Heart right ventricle (tissue), 16 donors: ENCODE measurements at regions of chr3 and their contacts with region 1.

Region 1: DNA sequence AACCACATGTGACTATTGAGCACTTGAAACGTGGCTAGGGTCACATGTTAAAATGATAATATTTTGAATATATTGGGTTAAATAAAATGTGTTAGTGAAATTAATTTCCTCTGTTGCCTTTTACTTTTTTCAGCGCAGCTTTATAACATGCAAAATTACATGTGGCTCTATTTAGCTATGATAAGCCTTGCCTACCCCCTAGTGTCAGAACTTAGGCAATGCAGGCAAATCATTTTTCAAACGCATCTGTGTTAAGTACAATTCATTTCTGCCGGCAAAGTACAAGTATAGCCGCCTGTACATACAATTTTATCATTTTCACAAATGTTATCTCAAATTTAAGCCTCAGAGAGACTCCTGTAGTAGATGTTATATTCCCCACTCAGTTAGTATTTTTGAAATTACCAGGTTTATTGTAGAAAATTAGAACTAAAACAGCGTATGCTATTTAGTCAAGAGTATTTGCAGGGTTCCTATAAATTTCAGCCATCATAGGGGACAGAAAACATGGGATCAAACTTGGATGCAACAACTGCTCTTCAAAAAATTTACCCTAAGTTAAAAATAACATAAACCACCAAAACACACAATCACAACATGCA is 56.1 kb downstream of the TAFA4 start:
- DNase-seq: peak in 1 of 2 donors; percentile 14
- ATAC-seq: peak in 2 of 8 donors; percentile 51 to 54
- H3K4me3 ChIP-seq: no peak overlapping the region
- H3K27ac ChIP-seq: no peak overlapping the region
- H3K4me1 ChIP-seq: no peaks in the 10 kb centered on the region
- H3K27me3 ChIP-seq: peaks cover 0 to 69% (median 13%) of the 10 kb centered on the region in 7 donors
- CTCF ChIP-seq: peak; percentile 73 to 90 (median 84)

Region 2: DNA sequence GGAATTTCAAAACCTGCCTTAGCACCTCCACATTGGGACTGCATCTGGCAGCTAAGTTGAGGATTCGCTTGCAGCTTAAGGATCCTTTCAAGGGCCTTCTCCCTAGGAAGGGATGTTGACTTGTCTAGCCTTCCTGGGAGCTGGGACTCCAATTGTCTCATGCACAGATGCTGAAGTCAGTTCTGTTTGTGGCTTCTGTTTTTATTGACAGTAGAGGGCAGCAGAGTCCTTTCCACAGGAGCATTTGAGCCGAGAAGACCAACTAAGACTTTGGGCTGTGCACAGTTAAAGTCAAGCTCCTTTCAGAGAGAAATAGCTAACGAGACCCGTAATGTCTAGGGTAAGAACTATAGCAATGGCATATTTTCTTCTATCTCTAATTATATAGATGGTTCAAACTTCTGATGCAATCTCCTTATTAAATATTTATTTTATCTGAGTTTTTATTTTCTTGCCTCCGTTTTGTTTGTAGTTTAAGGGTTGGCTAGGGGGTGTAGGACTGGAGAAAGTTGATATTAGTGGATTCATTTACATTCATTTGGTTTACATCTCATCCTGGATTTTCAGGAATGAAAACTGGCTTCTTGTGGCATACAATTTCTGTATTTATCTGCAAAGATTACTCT is 1937.8 kb before region 1 on chr3:
- intact Hi-C with region 1: loop called in 3 of 10 experiments (anchors 10 kb)
- DNase-seq: peak in 1 of 2 donors; percentile 17
- ATAC-seq: peak in 5 of 8 donors; percentile 44 to 75 (median 58)
- H3K4me3 ChIP-seq: no peak overlapping the region
- H3K27ac ChIP-seq: no peak overlapping the region
- H3K4me1 ChIP-seq: no peaks in the 10 kb centered on the region
- H3K27me3 ChIP-seq: peaks cover 0 to 52% (median 21%) of the 10 kb centered on the region in 7 donors
- CTCF ChIP-seq: peak; percentile 57 to 76 (median 71)

Region 3: GRCh38 chr3:67113802-67114407 is 1762.3 kb before region 1 on chr3:
- intact Hi-C with region 1: loop called in 7 of 10 experiments (anchors 5 to 10 kb)
- DNase-seq: peak; percentile 45 to 70
- ATAC-seq: peak in 5 of 8 donors; percentile 61 to 84 (median 72)
- H3K4me3 ChIP-seq: no peak overlapping the region
- H3K27ac ChIP-seq: no peak overlapping the region
- H3K4me1 ChIP-seq: peaks cover 0 to 4% (median 0%) of the 10 kb centered on the region in 9 donors
- H3K27me3 ChIP-seq: peaks cover 0 to 9% (median 0%) of the 10 kb centered on the region in 7 donors
- CTCF ChIP-seq: peak; percentile 52 to 94 (median 85)

Region 4: DNA sequence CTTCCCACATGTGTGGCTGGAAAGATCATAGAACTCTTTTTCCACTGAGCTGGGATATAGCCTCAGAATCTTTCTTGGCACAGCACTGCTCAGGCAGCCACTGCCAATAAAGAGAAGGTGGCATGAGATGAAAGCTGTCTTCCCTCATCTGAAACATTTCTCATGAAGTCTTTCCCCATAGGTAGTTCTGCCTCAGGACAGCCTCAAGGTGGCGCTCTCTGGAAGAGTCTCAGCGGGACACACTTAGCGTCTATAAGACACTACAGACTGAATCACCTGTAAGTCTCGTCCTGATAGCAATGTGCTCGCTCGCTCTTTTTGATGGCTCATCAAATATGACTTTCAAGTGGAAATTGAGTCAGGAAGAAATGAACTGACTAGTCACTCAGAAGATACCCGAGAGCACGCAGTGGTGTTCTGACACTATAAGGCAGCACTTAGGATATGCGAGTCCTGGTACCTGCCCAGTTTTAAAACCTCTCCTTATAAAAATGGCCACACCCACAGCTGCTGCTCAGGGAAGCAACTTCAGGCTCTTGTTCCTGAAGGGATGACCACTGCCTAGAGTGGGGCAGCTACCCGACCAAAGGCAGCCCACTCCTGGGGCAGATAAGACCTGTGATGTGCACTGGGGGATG is 1491.3 kb before region 1 on chr3:
- intact Hi-C with region 1: loop called in 7 of 10 experiments (anchors 5 to 10 kb)
- DNase-seq: peak; percentile 9 to 17
- ATAC-seq: peak in 7 of 8 donors; percentile 25 to 77 (median 67)
- H3K4me3 ChIP-seq: no peak overlapping the region
- H3K27ac ChIP-seq: no peak overlapping the region
- H3K4me1 ChIP-seq: peaks cover 0 to 35% (median 14%) of the 10 kb centered on the region in 9 donors
- H3K27me3 ChIP-seq: no peaks in the 10 kb centered on the region
- CTCF ChIP-seq: peak in 8 of 9 donors; percentile 6 to 62 (median 55)

Region 5: GRCh38 chr3:67819447-67819846 is 1056.8 kb before region 1 on chr3:
- intact Hi-C with region 1: loop called in 1 of 10 experiments (anchors 5 kb)
- DNase-seq: no peak
- ATAC-seq: no peak
- H3K4me3 ChIP-seq: no peak overlapping the region
- H3K27ac ChIP-seq: no peak overlapping the region
- H3K4me1 ChIP-seq: no peaks in the 10 kb centered on the region
- H3K27me3 ChIP-seq: no peaks in the 10 kb centered on the region
- CTCF ChIP-seq: peak in 6 of 9 donors; percentile 17 to 38 (median 31)

Region 6: GRCh38 chr3:68912376-68912775 is 36.2 kb after region 1 on chr3:
- intact Hi-C with region 1: no loop called
- DNase-seq: no peak
- ATAC-seq: no peak
- H3K4me3 ChIP-seq: no peak overlapping the region
- H3K27ac ChIP-seq: no peak overlapping the region
- H3K4me1 ChIP-seq: no peaks in the 10 kb centered on the region
- H3K27me3 ChIP-seq: peaks cover 0 to 87% (median 77%) of the 10 kb centered on the region in 7 donors
- CTCF ChIP-seq: no peak